Naive thymus-derived CD4-positive, alpha-beta T cell (primary cell): ENCODE measurements at regions of chrX and their contacts with region 1.

Region 1: GRCh38 chrX:41333744-41334259 is at the start of gene DDX3X:
- DNase-seq: peak; percentile 69 to 95 (median 91)
- ATAC-seq: peak; percentile 73
- H3K4me3 ChIP-seq: peak within 1 kb of the TSS; percentile 91
- H3K4me3 Mint-ChIP-seq: peak within 1 kb of the TSS; percentile 92 to 99 (median 96)
- H3K27ac ChIP-seq: peak within 1 kb of the TSS; percentile 100
- H3K27ac Mint-ChIP-seq: peak within 1 kb of the TSS; percentile 99 to 100 (median 100)
- H3K4me1 ChIP-seq: peaks cover 8 to 16% of the 10 kb centered on the region in 2 donors
- H3K4me1 Mint-ChIP-seq: peaks cover 12 to 65% (median 29%) of the 10 kb centered on the region in 7 donors
- H3K27me3 ChIP-seq: no peaks in the 10 kb centered on the region
- H3K27me3 Mint-ChIP-seq: peaks cover 0 to 6% (median 0%) of the 10 kb centered on the region in 5 donors
- total RNA-seq, gene DDX3X: 281 to 790 (median 296) TPM

Region 2: DNA sequence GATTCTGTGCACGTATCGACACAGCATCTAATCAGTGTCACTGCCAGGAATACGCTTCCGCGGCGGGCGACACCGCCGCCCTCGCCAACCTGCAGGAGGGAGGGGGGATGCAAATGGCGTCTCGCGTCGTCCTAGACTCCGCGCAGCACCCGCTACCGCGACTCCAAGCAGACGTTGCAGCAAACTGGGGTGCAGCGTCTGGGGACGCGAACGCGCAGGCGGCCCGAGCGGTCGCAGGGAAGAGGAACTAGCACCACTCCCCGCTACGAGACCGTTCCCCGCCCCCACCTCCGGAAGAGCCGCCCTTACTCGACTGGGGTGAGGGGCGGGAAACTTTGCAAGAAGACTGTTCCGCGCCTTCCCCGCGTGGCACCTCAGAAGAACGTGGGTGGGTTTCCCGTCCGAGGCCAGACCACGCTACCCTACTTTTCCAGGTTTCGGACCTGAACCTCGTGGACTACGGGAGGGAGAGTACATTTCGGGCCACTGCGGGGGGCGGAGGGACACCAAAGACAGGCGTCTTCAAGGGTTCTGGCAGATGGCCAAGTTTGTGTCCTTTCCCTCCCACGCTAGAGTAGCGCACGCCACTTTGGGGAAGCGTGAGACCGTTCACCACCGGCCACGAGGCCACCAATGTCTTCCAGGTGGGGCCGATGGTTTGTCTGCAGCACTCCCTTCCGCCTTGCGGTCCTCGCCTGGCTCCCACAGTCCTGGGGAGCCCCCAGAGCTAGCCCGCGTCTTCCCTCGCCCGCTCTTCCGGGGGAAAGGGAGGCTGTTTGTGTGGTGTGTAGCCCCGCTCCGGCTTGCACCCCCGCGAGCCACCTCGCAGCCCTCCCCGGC is 1158.1 kb before region 1 on chrX:
- CTCF ChIA-PET with region 1: no interaction called
- POLR2A ChIA-PET with region 1: no interaction called
- intact Hi-C with region 1: loop called in 1 of 2 experiments (anchors 5 kb)
- DNase-seq: peak; percentile 60 to 91 (median 83)
- ATAC-seq: peak; percentile 58
- H3K4me3 ChIP-seq: peak overlapping the region; percentile 73
- H3K4me3 Mint-ChIP-seq: peak overlapping the region; percentile 89 to 93 (median 90)
- H3K27ac ChIP-seq: peak overlapping the region; percentile 98
- H3K27ac Mint-ChIP-seq: peak overlapping the region; percentile 96 to 100 (median 98)
- H3K4me1 ChIP-seq: peaks cover 13 to 18% of the 10 kb centered on the region in 2 donors
- H3K4me1 Mint-ChIP-seq: peaks cover 5 to 46% (median 36%) of the 10 kb centered on the region in 7 donors
- H3K27me3 ChIP-seq: no peaks in the 10 kb centered on the region
- H3K27me3 Mint-ChIP-seq: no peaks in the 10 kb centered on the region

Region 3: DNA sequence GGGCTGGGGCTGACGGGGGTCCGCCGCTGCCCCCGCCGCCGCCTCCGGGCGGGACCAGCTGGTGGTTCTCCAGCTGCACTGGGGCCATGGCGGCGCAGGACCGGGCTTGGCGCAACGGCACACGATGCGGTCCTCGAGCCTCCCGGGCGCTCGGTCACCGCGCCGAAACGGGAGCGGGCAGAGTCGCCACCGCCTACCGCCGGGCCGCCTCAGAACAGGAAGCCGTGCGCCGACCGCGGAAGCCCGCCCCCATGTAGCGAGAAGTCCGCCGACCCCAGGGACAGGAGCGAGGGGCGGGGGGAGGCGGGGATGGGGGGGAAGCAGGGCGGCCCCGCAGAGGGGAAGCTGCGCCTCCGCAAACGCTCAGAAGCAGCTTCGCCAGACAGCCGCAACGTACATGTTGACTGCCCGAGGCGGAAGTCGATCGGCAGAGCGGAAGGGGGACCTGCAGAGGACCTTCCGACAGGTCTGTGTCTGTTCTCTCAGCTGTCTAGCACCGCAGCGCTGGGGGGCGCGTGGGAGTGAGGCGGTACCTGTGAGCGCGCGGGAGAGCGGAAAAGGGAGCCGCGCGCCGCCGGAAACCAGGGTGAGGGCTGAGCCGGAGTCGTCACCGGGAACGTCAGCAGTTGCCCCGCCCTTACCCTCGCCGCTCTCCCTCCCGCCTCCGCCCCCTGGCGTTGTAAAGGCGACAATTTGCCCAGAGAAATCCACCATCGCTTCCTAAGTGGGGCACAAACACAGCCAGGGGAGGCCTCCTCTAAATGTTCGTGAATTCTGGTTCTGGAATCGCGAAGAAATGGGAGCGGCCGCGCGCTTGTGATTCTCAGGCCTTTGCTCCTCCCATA is 598.3 kb before region 1 on chrX and contains the start of gene MED14:
- CTCF ChIA-PET with region 1: no interaction called
- POLR2A ChIA-PET with region 1: no interaction called
- intact Hi-C with region 1: loop called (anchors 2 to 5 kb)
- DNase-seq: peak; percentile 74 to 97 (median 96)
- ATAC-seq: peak; percentile 94
- H3K4me3 ChIP-seq: peak within 1 kb of the TSS; percentile 95
- H3K4me3 Mint-ChIP-seq: peak within 1 kb of the TSS; percentile 87 to 99 (median 95)
- H3K27ac ChIP-seq: peak within 1 kb of the TSS; percentile 93
- H3K27ac Mint-ChIP-seq: peak within 1 kb of the TSS; percentile 96 to 100 (median 98)
- H3K4me1 ChIP-seq: peaks cover 6 to 11% of the 10 kb centered on the region in 2 donors
- H3K4me1 Mint-ChIP-seq: peaks cover 9 to 71% (median 48%) of the 10 kb centered on the region in 7 donors
- H3K27me3 ChIP-seq: no peaks in the 10 kb centered on the region
- H3K27me3 Mint-ChIP-seq: no peaks in the 10 kb centered on the region
- total RNA-seq, gene MED14: 37.9 to 49.5 (median 44.3) TPM

Region 4: GRCh38 chrX:41275661-41276609 is 57.9 kb before region 1 on chrX:
- CTCF ChIA-PET with region 1: interaction called, 3 read pairs
- POLR2A ChIA-PET with region 1: interaction called, 8 read pairs
- intact Hi-C with region 1: loop called (anchors 1 to 2 kb)
- DNase-seq: peak in 8 of 9 donors; percentile 12 to 50 (median 43)
- ATAC-seq: peak; percentile 76
- H3K4me3 ChIP-seq: peak overlapping the region; percentile 64
- H3K4me3 Mint-ChIP-seq: peak overlapping the region; percentile 75 to 88 (median 82)
- H3K27ac ChIP-seq: peak overlapping the region; percentile 35
- H3K27ac Mint-ChIP-seq: peak overlapping the region in 8 of 9 donors; percentile 36 to 85 (median 70)
- H3K4me1 ChIP-seq: no peaks in the 10 kb centered on the region
- H3K4me1 Mint-ChIP-seq: peaks cover 0 to 16% (median 10%) of the 10 kb centered on the region in 7 donors
- H3K27me3 ChIP-seq: no peaks in the 10 kb centered on the region
- H3K27me3 Mint-ChIP-seq: peaks cover 0 to 2% (median 0%) of the 10 kb centered on the region in 5 donors

Region 5: DNA sequence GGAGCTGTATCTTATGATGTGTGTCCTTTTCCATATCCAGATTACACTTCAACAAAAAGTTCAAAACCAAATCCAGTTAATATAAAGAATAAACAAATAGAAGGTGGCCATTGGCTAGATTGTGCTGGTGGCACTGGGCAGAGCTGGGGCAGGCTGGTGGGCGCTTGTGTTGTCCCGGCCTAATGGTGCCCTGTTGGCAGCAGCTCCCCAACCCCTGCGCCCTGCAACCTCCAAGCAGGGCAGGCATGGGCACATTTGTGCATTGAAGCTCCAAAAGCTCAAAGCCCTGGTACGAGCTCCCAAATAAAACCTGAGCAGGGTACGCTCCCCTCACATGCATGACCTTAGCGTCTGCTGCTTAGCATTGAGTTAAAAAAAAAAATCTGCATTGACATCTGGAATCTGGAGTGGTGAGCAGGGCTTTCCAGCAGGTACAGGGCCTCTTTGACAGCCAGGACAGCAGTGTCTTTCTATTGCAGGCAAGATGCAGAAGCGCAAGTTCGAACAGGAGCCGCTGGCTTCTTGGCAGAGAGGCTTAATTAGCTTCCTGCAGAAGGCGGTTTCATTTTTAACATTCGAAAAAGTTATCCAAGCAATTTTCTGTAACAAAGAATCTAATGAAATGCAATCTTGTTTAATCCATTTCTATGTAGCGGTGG is 87.4 kb after region 1 on chrX:
- CTCF ChIA-PET with region 1: no interaction called
- POLR2A ChIA-PET with region 1: interaction called, 5 read pairs
- intact Hi-C with region 1: loop called in 1 of 2 experiments (anchors 2 kb)
- DNase-seq: no peak
- ATAC-seq: no peak
- H3K4me3 ChIP-seq: peak overlapping the region; percentile 20
- H3K4me3 Mint-ChIP-seq: peak overlapping the region; percentile 42 to 84 (median 70)
- H3K27ac ChIP-seq: no peak overlapping the region
- H3K27ac Mint-ChIP-seq: peak overlapping the region in 3 of 9 donors; percentile 25 to 62 (median 52)
- H3K4me1 ChIP-seq: no peaks in the 10 kb centered on the region
- H3K4me1 Mint-ChIP-seq: peaks cover 0 to 14% (median 4%) of the 10 kb centered on the region in 7 donors
- H3K27me3 ChIP-seq: no peaks in the 10 kb centered on the region
- H3K27me3 Mint-ChIP-seq: peaks cover 0 to 5% (median 0%) of the 10 kb centered on the region in 5 donors

Region 6: DNA sequence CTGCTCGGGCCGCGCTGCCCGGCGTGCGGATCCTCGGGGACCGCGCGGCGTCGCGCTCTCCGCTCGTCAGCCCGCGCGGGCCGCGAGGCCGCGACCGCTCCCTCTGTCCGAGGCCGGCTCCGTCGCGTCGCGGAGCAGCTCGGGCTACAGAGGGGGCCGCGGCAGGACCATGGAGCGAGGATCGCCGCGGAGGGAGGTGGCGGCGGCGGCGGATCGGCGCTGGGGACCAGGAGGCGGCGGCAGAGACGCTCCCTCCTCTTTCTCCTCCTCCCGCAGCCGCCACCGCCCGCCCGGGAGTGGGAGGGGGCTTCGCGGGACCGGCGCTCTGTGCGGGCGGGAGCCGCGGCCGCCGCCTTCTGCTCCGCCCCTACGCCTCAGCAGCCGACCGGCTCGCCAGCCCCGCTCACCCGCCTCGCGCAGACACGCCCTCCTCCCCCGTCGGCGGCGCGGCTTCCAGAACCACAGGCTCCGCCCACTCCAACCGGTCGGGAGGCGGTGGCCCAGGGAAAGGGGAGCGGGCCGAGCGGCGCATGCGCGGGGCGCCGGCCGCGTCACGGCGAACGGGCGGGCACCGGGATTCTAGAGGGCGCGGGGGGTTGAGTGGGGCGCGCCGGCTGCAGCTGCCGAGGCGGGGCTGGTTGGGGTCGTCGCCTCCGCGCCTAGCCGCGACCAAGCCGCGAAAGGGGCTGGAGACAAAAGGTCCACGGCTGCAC is 589.6 kb after region 1 on chrX and contains the start of gene CASK:
- CTCF ChIA-PET with region 1: no interaction called
- POLR2A ChIA-PET with region 1: no interaction called
- intact Hi-C with region 1: loop called in 1 of 2 experiments (anchors 5 kb)
- DNase-seq: peak; percentile 74 to 91 (median 84)
- ATAC-seq: peak; percentile 92
- H3K4me3 ChIP-seq: peak within 1 kb of the TSS; percentile 78
- H3K4me3 Mint-ChIP-seq: peak within 1 kb of the TSS; percentile 91 to 99 (median 92)
- H3K27ac ChIP-seq: peak within 1 kb of the TSS; percentile 70
- H3K27ac Mint-ChIP-seq: peak within 1 kb of the TSS; percentile 76 to 95 (median 91)
- H3K4me1 ChIP-seq: peaks cover 5% of the 10 kb centered on the region in 2 donors
- H3K4me1 Mint-ChIP-seq: peaks cover 6 to 39% (median 29%) of the 10 kb centered on the region in 7 donors
- H3K27me3 ChIP-seq: no peaks in the 10 kb centered on the region
- H3K27me3 Mint-ChIP-seq: peaks cover 0 to 2% (median 0%) of the 10 kb centered on the region in 5 donors
- total RNA-seq, gene CASK: 31.5 to 72.4 (median 65.0) TPM